ENCODE measurements at regions of chr6 and their contacts with region 1.

Region 1: DNA sequence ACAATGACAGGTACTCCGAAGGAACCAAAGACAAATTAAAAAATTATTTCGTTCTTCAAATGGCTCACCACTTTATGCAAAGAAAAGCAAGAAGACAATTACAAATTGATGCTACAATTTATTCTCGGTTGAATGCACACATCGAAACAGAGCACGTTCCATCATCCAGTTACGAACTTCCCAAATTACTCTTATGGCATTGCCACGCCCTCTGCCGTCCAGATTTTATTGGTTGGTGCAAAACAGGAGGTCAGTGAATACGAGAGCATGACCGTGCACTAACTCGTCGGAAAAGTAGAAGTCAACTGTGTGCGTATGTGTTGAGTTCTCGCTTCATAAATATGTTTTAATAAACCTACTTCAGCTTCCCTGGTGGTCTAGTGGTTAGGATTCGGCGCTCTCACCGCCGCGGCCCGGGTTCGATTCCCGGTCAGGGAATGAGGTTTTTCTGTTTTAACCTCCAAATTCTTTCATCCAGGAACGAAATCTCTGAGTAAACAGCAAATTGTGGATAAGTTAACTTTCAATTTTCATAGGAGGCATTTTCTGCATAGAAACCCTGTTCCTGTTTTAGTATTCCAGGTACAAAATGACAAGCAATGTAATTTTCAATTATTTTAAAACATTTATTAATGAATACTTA is 23.2 kb downstream of the ZNF311 start:
- DNase-seq: peak; percentile 94
- H3K4me3 ChIP-seq: peak overlapping the region; percentile 44 to 82 (median 60)
- H3K27ac ChIP-seq: peak overlapping the region; percentile 42
- H3K4me1 ChIP-seq: peaks cover 25% of the 10 kb centered on the region
- H3K27me3 ChIP-seq: no peaks in the 10 kb centered on the region
- CTCF ChIP-seq: no peak
- POLR2A ChIP-seq: no peak

Region 2: DNA sequence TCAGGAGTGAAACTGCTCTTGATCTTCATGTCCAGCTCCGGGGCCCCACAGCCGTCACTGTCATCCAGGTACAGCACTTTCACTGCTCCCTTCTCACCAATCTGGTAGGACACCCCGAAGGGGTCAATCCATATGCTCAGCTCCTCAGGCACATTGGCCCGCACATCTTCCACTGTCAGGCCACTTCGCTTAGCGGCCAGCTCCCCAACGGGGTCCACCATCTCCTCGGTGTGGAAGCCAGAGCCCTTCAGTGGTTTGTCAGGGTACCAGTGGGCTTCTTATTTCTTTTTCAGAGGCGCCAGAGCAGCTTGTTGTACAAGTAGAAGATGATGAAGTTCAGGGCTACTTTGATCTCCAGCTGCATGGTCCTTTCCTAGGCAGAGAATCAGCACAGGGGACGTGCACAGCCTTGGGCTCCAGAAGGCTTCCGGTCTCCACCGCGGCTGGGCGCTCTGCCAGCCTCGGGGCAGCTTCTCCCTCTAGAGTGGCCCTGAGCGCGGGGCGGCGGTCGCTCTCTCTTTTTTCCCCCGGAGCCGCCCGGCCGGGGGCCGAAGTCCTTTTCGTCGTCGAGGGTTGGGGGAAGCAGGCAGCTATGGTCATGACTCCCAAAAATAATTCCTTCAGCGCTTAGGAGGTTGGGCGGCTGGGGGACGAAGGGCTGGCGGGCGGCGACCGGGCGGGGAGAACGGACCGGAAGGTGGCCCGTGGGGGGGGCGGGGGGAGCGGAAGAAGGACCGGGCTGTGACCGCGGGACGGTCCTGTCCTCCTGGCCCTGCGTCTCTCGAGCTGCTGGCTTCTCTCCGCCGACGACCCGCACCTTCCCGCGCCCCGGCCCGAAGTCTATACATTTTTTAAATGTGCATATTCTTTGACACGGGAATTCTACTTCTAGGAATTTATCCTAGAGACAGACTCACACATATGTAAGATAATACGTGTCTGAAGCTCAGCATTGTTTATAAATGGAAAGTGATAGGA is 763.4 kb before region 1 on chr6:
- CTCF ChIA-PET with region 1: no interaction called
- POLR2A ChIA-PET with region 1: no interaction called
- dilution Hi-C with region 1: no loop called
- intact Hi-C with region 1: loop called (anchors 10 kb)
- DNase-seq: peak; percentile 59
- H3K4me3 ChIP-seq: peak overlapping the region; percentile 40 to 60 (median 53)
- H3K27ac ChIP-seq: peak overlapping the region; percentile 21
- H3K4me1 ChIP-seq: peaks cover 3% of the 10 kb centered on the region
- H3K27me3 ChIP-seq: peaks cover 10 to 21% of the 10 kb centered on the region in 2 experiments
- CTCF ChIP-seq: no peak
- POLR2A ChIP-seq: no peak

Region 3: GRCh38 chr6:28789553-28790083 is 192.3 kb before region 1 on chr6:
- CTCF ChIA-PET with region 1: no interaction called
- POLR2A ChIA-PET with region 1: no interaction called
- dilution Hi-C with region 1: no loop called
- intact Hi-C with region 1: loop called (anchors 5 kb)
- DNase-seq: peak; percentile 49
- H3K4me3 ChIP-seq: peak overlapping the region; percentile 5 to 65 (median 57)
- H3K27ac ChIP-seq: no peak overlapping the region
- H3K4me1 ChIP-seq: peaks cover under 1% of the 10 kb centered on the region
- H3K27me3 ChIP-seq: peaks cover 37 to 56% of the 10 kb centered on the region in 2 experiments
- CTCF ChIP-seq: no peak
- POLR2A ChIP-seq: no peak

Region 4: GRCh38 chr6:28880894-28881780 is 100.8 kb before region 1 on chr6:
- CTCF ChIA-PET with region 1: no interaction called
- POLR2A ChIA-PET with region 1: interaction called, 4 read pairs
- dilution Hi-C with region 1: no loop called
- intact Hi-C with region 1: loop called (anchors 1 kb)
- DNase-seq: peak; percentile 84
- H3K4me3 ChIP-seq: peak overlapping the region; percentile 69 to 97 (median 86)
- H3K27ac ChIP-seq: no peak overlapping the region
- H3K4me1 ChIP-seq: peaks cover 2% of the 10 kb centered on the region
- H3K27me3 ChIP-seq: peaks cover 23 to 27% of the 10 kb centered on the region in 2 experiments
- CTCF ChIP-seq: no peak
- POLR2A ChIP-seq: no peak

Region 5: DNA sequence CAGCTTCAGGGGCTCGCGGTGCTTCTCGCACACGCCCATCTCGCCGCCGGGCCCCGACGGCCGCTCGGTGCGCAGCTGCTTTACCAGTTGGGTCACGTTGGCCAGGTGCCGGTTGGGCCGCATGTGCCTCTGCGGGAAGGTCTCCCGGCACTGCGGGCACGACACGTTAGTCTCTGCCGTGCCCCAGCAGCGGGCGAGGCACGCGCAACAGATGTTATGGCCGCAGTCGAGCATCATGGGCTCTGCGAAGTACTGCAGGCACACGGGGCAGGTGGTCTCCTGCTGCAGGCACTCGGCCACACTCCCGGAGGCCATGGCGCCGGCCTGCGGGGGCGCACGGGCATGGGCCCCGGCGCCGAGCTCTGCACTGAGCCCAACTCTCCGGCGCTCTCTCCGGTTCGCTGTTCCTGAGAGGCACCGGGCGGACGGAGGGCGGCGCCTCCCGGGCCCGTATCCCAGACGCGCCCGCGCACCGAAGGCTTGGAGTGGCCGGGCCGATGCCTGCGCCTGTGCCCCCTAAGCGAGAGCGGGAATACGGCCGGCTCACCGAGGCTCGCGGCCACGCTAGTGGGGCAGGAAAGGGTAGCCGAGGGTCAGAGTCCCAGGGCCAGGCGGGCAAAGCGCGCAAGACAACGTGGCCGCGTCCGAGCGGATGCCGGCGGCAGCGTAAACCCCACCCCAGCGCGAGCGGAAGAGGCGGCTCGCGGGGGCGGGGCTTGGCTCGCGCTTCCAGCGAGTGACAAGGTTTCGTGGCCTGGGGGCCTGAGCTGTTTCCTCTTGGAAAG is 58.4 kb before region 1 on chr6 and contains the start of gene TRIM27:
- CTCF ChIA-PET with region 1: interaction called, 13 read pairs
- POLR2A ChIA-PET with region 1: interaction called, 4 read pairs
- dilution Hi-C with region 1: no loop called
- intact Hi-C with region 1: loop called (anchors 1 kb)
- DNase-seq: peak; percentile 85
- H3K4me3 ChIP-seq: peak within 1 kb of the TSS; percentile 55 to 90 (median 63)
- H3K27ac ChIP-seq: peak within 1 kb of the TSS; percentile 77
- H3K4me1 ChIP-seq: peaks cover 18% of the 10 kb centered on the region
- H3K27me3 ChIP-seq: no peaks in the 10 kb centered on the region
- CTCF ChIP-seq: no peak
- POLR2A ChIP-seq: peak; percentile 95
- total RNA-seq, gene TRIM27: 67.5 and 69.2 TPM in 2 replicates

Region 6: DNA sequence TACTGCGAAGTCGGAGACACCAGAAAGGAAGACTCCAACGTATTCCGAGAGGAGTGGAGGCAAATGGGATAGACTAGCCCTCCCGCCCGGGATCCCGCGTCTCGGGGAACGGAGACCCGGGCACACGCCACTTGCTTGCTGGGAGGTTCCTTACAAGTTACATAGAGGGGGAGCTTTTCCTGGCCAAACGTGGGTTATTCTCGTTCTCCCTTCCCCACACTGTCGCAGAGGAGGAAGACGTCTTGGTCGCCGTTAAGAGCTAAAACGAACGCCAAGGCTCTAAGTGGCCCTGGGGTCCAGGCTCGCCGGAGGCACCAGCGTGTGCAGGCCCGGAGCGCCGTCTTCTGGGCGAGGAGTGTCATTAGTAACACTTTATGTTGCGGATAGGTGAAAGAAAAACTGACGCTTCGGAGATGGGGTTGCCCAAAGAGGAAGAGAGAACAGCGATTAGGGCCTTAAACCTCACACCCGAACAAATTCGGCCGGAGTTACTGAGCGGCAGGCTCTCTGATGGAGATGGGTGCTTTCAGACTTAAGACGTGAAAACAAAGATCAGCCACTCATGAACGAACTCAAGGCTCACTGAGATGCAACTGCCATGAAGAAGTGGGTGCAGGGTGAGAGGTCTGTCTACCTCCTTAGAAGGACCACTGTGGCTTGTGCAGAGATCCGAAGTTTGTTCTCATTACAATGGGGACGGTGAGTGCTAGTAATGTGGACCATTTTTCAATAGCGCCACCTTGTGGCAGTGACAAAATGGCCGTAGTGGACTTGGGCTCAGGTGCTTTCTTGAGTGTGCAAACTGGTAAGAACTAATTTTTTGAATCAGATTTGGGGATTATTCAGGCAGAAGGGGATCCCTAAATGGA is 34.8 kb after region 1 on chr6:
- CTCF ChIA-PET with region 1: interaction called, 15 read pairs
- POLR2A ChIA-PET with region 1: no interaction called
- dilution Hi-C with region 1: no loop called
- intact Hi-C with region 1: loop called (anchors 1 kb)
- DNase-seq: peak; percentile 86
- H3K4me3 ChIP-seq: peak overlapping the region; percentile 44 to 90 (median 80)
- H3K27ac ChIP-seq: no peak overlapping the region
- H3K4me1 ChIP-seq: peaks cover 9% of the 10 kb centered on the region
- H3K27me3 ChIP-seq: peaks cover 2 to 3% of the 10 kb centered on the region in 2 experiments
- CTCF ChIP-seq: peak; percentile 72 to 78
- POLR2A ChIP-seq: no peak

Measured in endothelial cell of umbilical vein (primary cell).